Activated CD4-positive, alpha-beta T cell treated with anti-CD3 and anti-CD28 coated beads, Interleukin-2, amount 10 ng/mL, durations not matched to agents 24 days and 14 days (primary cell): ENCODE measurements at regions of chr11 and their contacts with region 1.

Region 1: DNA sequence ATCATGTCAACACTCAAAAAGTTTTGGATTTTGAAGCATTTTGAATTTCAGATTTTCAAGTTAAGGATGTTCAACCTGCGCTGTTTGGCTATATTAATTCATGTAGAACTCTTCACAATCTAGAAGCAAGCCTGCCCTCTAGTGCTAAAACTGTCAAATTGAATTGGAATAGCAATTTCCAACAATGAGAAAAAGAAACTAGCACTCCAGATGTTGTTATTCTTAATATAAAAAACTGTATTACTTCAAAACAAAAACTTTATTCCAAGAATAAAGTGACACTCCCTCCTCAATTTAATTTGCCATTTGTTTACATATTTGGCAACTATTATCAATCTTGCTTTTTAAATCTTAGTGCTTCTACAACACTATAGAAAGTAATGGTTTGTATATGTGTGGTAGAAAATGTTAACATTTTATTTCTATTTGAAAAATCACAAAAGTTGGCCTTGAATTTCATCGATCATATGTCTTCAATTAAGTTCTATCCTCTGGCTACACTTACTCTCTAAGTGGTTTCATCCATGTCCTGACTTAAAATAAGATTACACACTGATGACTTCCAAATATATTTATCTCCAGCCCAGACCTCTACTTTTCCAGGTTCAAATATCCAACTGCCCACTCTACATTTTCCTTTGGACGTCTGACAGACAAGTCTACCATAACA is 36.6 kb downstream of the DCUN1D5 start:
- DNase-seq: peak; percentile 64
- H3K4me3 Mint-ChIP-seq: no peak overlapping the region
- H3K27ac Mint-ChIP-seq: no peak overlapping the region
- H3K4me1 Mint-ChIP-seq: peaks cover 5% of the 10 kb centered on the region
- H3K27me3 Mint-ChIP-seq: no peaks in the 10 kb centered on the region

Region 2: DNA sequence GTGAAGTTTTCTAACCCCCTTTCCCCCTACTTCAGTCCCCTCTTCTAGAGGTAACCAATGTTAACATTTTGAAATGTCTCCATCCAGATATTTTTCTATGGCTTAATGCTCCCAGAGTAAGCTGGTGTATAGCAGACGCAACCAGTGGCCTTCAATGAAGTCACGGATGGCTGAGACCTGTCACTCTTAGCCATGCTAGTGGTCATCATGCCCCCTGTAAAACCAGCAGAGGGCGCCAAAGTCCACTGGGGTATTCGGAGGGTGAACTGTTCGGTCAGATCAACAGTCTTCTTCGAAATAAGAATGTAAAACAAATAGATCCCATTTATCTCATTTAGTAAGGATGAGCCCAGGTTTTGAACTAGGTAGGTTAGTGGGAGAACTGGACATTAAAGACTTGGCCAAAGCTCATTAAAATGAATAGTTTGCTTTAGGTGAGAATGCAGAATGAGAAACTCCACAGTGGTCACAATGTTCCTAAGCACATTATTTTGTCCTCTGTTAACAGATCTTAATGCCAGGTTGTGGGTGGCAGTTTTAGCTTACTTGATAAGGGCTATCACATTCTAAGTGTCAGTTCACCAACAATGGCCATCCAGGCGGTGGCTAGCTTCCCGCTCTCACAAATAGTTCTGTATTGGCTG is 322.0 kb before region 1 on chr11:
- intact Hi-C with region 1: loop called (anchors 10 kb)
- DNase-seq: peak; percentile 83
- H3K4me3 Mint-ChIP-seq: no peak overlapping the region
- H3K27ac Mint-ChIP-seq: no peak overlapping the region
- H3K4me1 Mint-ChIP-seq: no peaks in the 10 kb centered on the region
- H3K27me3 Mint-ChIP-seq: peaks cover 18% of the 10 kb centered on the region

Region 3: DNA sequence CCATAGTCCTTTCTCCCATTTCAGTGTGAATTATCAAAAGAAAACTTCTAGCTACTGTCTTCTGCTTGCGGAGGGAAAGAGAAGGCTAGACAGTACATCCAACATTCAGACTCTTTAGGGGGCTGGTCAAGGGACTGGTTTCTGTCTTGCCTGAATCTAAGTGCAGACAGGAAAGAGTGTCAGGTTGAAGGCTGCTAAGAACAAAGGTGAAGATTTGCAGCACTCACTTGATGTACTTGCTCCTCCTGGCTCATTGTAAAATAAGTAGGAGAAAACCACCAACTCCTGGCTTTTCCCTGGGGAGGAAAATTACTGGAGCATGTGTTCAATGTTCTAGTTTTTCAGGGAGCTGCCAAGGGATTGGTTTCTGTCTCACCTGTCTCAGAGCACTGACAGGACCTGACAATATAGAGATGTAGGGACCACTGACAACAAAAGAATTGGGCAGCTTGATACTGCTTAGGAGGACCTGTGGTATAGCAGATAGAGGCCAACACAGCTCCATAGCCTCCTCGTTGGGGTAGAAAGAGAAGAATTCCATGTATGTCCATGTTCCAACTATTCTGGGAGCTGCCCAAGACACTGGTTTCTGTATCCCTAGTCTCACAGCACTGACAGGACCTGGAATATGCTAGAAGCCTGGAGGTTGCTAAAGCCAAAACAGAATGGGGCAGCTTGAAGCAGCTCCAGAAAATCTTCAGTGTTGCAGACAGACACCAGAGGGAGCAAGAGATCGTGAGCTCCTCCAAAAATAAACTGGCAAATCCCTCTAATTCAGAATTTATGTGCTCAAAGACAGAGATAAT is 140.9 kb before region 1 on chr11:
- intact Hi-C with region 1: loop called (anchors 1 kb)
- DNase-seq: peak; percentile 58
- H3K4me3 Mint-ChIP-seq: no peak overlapping the region
- H3K27ac Mint-ChIP-seq: no peak overlapping the region
- H3K4me1 Mint-ChIP-seq: no peaks in the 10 kb centered on the region
- H3K27me3 Mint-ChIP-seq: peaks cover 6% of the 10 kb centered on the region

Region 4: DNA sequence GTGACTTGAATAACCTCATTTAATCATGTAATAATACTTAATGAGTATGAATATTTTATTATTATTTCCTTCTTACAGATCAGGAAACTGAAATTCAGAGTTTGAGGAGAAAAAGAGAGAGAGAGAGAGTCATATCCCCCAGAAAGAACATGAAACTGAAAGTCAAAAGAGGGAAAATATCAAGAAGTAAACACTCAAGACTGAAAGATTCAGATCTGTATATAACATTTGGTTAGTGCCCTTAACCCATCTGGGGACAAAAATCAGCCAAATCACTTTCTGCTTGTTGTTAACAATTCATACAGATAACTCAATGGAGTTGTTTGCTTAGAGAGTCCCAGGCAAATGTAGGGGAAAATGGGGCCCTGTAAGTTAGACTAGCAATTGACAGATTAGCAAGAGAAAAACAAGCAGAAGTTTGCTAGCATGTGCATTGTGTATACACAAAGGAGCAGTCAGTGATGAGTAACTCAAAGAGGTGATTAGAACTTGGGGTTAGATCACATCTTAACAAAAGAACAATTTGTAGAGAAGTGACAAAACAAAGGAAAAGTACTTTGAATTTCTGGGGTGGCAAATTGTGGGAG is 73.9 kb before region 1 on chr11:
- intact Hi-C with region 1: loop called (anchors 10 kb)
- DNase-seq: peak; percentile 60
- H3K4me3 Mint-ChIP-seq: no peak overlapping the region
- H3K27ac Mint-ChIP-seq: peak overlapping the region; percentile 16
- H3K4me1 Mint-ChIP-seq: peaks cover 6% of the 10 kb centered on the region
- H3K27me3 Mint-ChIP-seq: peaks cover 4% of the 10 kb centered on the region

Region 5: GRCh38 chr11:103024086-103024485 is 31.3 kb before region 1 on chr11:
- intact Hi-C with region 1: no loop called
- DNase-seq: no peak
- H3K4me3 Mint-ChIP-seq: no peak overlapping the region
- H3K27ac Mint-ChIP-seq: no peak overlapping the region
- H3K4me1 Mint-ChIP-seq: peaks cover 8% of the 10 kb centered on the region
- H3K27me3 Mint-ChIP-seq: peaks cover 12% of the 10 kb centered on the region

Region 6: GRCh38 chr11:103035791-103036434 is 19.4 kb before region 1 on chr11:
- intact Hi-C with region 1: loop called (anchors 1 kb)
- DNase-seq: peak; percentile 87
- H3K4me3 Mint-ChIP-seq: peak overlapping the region; percentile 18
- H3K27ac Mint-ChIP-seq: peak overlapping the region; percentile 79
- H3K4me1 Mint-ChIP-seq: peaks cover 18% of the 10 kb centered on the region
- H3K27me3 Mint-ChIP-seq: peaks cover 2% of the 10 kb centered on the region